Naive thymus-derived CD4-positive, alpha-beta T cell (primary cell): ENCODE measurements at regions of chr10 and their contacts with region 1.

Region 1: DNA sequence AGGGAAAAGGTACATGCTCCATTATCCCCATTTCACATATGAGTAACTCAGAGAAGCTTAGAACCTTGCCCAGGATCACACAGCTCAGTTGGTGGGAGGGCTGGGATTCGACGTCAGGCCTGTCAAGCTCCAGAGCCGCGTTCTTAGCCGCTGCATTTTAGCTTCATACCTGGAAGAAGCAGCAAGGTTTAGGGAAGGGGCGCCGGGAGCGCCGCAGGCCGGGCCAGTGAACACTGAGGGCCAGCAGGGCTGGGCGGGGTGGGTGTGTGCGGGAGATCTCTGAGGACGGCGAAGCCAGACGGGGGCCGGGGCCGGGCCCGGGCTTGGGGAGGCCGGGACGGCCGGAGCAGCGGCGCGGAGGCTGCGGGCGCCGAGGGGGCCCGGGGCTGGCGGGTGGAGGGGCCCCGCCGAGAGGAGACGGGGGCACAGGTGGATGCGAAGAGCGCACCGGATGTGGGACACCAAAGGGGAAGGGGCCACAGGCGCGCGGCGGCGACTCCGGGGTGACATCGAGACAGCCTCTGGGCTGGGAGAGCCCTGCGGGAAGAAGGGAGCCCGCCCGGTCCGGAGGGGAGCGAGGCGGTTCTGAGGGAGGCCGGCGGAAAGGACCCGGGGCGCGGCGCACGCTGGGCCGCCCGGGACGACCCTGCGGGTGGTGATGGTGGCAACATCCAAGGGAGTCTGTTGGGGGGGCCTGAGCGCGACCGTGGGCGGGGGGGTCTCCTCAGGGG is 498 bp downstream of the NDST2 start:
- DNase-seq: peak; percentile 46 to 76 (median 71)
- ATAC-seq: peak; percentile 18
- H3K4me3 ChIP-seq: peak overlapping the region; percentile 69
- H3K4me3 Mint-ChIP-seq: peak overlapping the region; percentile 88 to 97 (median 94)
- H3K27ac ChIP-seq: peak overlapping the region; percentile 97
- H3K27ac Mint-ChIP-seq: peak overlapping the region; percentile 94 to 98 (median 96)
- H3K4me1 ChIP-seq: peaks cover 26 to 31% of the 10 kb centered on the region in 2 donors
- H3K4me1 Mint-ChIP-seq: peaks cover 31 to 54% (median 49%) of the 10 kb centered on the region in 7 donors
- H3K27me3 ChIP-seq: no peaks in the 10 kb centered on the region
- H3K27me3 Mint-ChIP-seq: no peaks in the 10 kb centered on the region

Region 2: DNA sequence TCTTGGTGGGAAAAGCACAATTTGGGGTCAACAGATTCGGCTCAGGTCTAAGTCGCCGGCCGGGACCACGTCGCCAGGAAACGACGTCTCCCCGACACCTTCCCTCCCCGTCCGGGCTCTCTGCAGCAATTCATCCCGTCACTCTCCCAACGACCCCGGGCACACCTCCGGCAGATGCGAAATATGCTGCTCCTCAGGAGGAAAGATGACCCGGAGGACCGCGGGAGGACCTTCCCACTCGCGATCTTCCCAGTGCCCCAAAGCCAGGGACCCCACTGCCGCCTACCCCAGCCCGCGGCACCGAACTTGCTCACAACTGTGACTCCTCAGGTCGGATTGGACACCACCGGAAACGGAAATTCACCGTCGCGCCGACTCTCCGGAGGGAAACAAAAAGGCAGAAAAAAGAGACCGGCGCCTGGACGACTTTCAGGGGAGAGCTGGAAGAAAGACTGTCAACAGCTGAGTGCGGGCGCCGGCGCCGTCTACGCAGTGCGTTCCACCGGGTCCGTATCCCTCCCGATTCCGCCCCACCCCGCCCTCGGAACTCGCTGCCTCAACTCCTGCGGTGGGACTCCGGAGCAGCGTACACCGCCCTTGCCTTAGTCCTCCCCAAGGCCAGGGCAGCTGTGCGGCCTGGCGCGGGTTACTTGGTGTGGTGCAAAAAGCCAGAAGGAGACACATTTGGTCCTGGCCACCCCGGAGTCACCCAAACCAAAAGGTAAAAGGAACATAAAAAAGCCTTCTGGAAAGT is 80.6 kb before region 1 on chr10:
- CTCF ChIA-PET with region 1: no interaction called
- POLR2A ChIA-PET with region 1: no interaction called
- intact Hi-C with region 1: loop called in 1 of 2 experiments (anchors 1 kb)
- DNase-seq: peak; percentile 86 to 94 (median 89)
- ATAC-seq: peak; percentile 94
- H3K4me3 ChIP-seq: peak overlapping the region; percentile 99
- H3K4me3 Mint-ChIP-seq: peak overlapping the region; percentile 95 to 100 (median 98)
- H3K27ac ChIP-seq: peak overlapping the region; percentile 82
- H3K27ac Mint-ChIP-seq: peak overlapping the region; percentile 91 to 98 (median 96)
- H3K4me1 ChIP-seq: peaks cover 5 to 10% of the 10 kb centered on the region in 2 donors
- H3K4me1 Mint-ChIP-seq: peaks cover 0 to 32% (median 21%) of the 10 kb centered on the region in 7 donors
- H3K27me3 ChIP-seq: no peaks in the 10 kb centered on the region
- H3K27me3 Mint-ChIP-seq: no peaks in the 10 kb centered on the region

Region 3: DNA sequence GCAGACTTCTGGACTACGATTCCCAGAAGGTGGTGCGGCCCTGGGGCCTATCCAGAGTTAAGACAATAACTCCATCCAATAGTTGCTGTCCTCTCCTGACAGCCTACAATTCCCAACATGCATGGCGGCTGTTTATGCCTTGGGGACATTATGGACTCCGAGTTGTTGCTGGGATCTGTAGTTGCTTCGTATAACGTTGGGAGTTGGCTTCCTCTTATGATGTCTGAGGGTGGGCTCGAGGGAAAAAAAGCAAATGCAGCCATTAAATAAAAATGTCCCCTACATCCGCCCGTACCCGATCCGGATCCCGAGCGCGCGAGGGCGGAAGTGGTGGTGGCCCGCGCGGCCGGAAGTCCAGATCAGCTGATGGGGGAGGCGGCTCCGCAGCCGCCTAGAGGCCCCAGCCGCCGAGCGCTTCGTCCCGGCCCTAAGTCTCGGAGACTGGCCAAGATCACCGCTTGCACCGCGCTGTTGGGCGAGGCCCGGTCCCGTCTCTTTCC is 25.6 kb before region 1 on chr10 and contains the start of gene ZSWIM8:
- CTCF ChIA-PET with region 1: no interaction called
- POLR2A ChIA-PET with region 1: interaction called, 150 read pairs
- intact Hi-C with region 1: loop called (anchors 1 kb)
- DNase-seq: peak; percentile 70 to 93 (median 86)
- ATAC-seq: peak; percentile 91
- H3K4me3 ChIP-seq: peak within 1 kb of the TSS; percentile 91
- H3K4me3 Mint-ChIP-seq: peak within 1 kb of the TSS; percentile 97 to 100 (median 98)
- H3K27ac ChIP-seq: peak within 1 kb of the TSS; percentile 83
- H3K27ac Mint-ChIP-seq: peak within 1 kb of the TSS; percentile 95 to 99 (median 98)
- H3K4me1 ChIP-seq: peaks cover 36 to 43% of the 10 kb centered on the region in 2 donors
- H3K4me1 Mint-ChIP-seq: peaks cover 27 to 66% (median 53%) of the 10 kb centered on the region in 7 donors
- H3K27me3 ChIP-seq: no peaks in the 10 kb centered on the region
- H3K27me3 Mint-ChIP-seq: no peaks in the 10 kb centered on the region
- total RNA-seq, gene ZSWIM8: 70.9 to 102 (median 83.2) TPM

Region 4: GRCh38 chr10:73791871-73792400 is 19.0 kb before region 1 on chr10:
- CTCF ChIA-PET with region 1: no interaction called
- POLR2A ChIA-PET with region 1: interaction called, 150 read pairs
- intact Hi-C with region 1: no loop called
- DNase-seq: no peak
- ATAC-seq: no peak
- H3K4me3 ChIP-seq: no peak overlapping the region
- H3K4me3 Mint-ChIP-seq: no peak overlapping the region
- H3K27ac ChIP-seq: no peak overlapping the region
- H3K27ac Mint-ChIP-seq: no peak overlapping the region
- H3K4me1 ChIP-seq: peaks cover 4 to 9% of the 10 kb centered on the region in 2 donors
- H3K4me1 Mint-ChIP-seq: peaks cover 5 to 15% (median 10%) of the 10 kb centered on the region in 7 donors
- H3K27me3 ChIP-seq: no peaks in the 10 kb centered on the region
- H3K27me3 Mint-ChIP-seq: no peaks in the 10 kb centered on the region

Region 5: DNA sequence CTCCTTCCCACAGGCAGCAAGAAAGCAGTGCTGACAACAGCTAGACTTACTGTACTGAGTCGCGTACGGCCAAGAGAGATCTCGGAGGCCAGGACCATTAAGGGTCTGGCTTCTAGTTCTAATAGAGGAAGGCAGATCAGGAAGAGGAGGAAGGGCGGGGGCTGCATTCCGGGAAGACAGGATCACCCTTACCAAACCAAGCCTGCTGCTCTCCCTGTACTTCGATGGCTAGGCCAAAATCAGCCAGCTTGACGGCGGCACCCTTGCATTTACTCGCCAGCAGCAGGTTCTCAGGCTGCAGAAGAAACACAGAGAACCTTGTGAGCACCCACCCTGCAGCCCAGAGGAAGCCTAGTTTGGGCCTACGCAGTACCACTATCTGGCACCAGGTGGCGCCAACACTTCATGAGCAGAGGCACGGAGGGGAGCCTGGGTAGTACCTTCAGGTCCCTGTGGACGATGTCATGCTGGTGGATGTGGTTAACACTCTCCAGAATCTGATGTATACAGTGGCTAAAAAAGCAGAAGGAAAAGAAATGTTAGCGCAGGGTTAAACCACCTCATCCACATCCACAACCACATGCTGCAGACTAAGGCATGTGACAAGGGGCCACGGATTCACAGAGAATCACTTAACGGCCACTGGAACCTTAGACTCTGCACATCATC is 38.1 kb after region 1 on chr10:
- CTCF ChIA-PET with region 1: interaction called, 3 read pairs
- POLR2A ChIA-PET with region 1: interaction called, 5 read pairs
- intact Hi-C with region 1: loop called in 1 of 2 experiments (anchors 1 kb)
- DNase-seq: peak; percentile 82 to 93 (median 88)
- ATAC-seq: peak; percentile 100
- H3K4me3 ChIP-seq: no peak overlapping the region
- H3K4me3 Mint-ChIP-seq: peak overlapping the region in 5 of 10 donors; percentile 1 to 58 (median 37)
- H3K27ac ChIP-seq: peak overlapping the region; percentile 56
- H3K27ac Mint-ChIP-seq: peak overlapping the region; percentile 75 to 97 (median 94)
- H3K4me1 ChIP-seq: peaks cover 6 to 7% of the 10 kb centered on the region in 2 donors
- H3K4me1 Mint-ChIP-seq: peaks cover 11 to 23% (median 16%) of the 10 kb centered on the region in 7 donors
- H3K27me3 ChIP-seq: no peaks in the 10 kb centered on the region
- H3K27me3 Mint-ChIP-seq: no peaks in the 10 kb centered on the region

Region 6: DNA sequence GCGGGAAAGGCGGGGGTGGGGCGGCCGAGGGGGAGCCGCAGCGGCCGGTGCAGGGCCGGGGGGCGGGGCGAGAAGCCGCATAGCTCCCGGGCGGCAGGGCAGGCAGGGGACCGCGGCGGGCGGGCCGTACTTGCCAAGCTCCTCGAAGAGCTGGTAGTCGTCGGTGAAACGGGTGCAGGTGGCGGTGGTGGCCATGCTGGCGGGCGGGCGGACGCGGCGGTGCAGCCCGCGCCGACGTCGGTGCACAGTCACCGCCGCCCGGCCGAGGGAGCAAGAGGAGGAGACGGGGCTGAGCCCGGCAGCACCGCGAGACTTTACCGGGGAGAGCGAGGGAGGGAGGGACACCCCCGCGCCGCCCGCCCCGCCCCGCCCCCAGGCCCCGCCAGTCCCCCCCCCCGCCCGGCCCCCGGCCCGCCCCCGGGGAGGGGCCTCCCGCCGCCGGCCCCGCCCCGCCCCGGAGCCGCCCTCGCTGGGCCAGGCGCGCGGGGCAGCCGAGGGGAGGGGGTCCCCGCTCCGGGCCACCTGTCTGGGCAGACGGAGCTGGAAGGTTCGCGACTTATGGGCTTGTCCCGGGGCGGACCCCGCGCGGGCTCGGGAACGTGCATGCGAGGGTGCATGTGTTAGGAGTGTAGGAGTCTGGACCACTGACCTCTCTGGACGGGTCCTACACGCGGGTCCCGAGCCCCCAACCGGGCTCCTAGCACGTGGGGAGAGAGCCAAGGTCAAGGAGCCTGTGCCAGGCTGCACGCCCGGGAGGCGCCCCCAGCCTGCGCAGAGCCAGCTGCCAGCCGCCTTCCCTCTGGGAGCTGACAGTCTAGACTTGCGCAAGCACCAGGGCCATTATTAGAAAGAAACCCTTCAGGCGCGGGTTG is 63.6 kb after region 1 on chr10 and contains the start of gene CAMK2G:
- CTCF ChIA-PET with region 1: interaction called, 14 read pairs
- POLR2A ChIA-PET with region 1: interaction called, 4 read pairs
- intact Hi-C with region 1: loop called (anchors 1 kb)
- DNase-seq: peak; percentile 68 to 86 (median 83)
- ATAC-seq: peak; percentile 91
- H3K4me3 ChIP-seq: peak within 1 kb of the TSS; percentile 94
- H3K4me3 Mint-ChIP-seq: peak within 1 kb of the TSS; percentile 83 to 96 (median 90)
- H3K27ac ChIP-seq: peak within 1 kb of the TSS; percentile 86
- H3K27ac Mint-ChIP-seq: peak within 1 kb of the TSS; percentile 81 to 97 (median 94)
- H3K4me1 ChIP-seq: peaks cover 30 to 48% of the 10 kb centered on the region in 2 donors
- H3K4me1 Mint-ChIP-seq: peaks cover 41 to 84% (median 74%) of the 10 kb centered on the region in 7 donors
- H3K27me3 ChIP-seq: no peaks in the 10 kb centered on the region
- H3K27me3 Mint-ChIP-seq: peaks cover 0 to 2% (median 0%) of the 10 kb centered on the region in 5 donors
- total RNA-seq, gene CAMK2G: 44.6 to 70.9 (median 61.9) TPM

Region 7: GRCh38 chr10:73997787-73998622 is 187.1 kb after region 1 on chr10 and contains the start of gene VCL:
- CTCF ChIA-PET with region 1: no interaction called
- POLR2A ChIA-PET with region 1: no interaction called
- intact Hi-C with region 1: loop called in 1 of 2 experiments (anchors 1 kb)
- DNase-seq: peak; percentile 90 to 97 (median 95)
- ATAC-seq: peak; percentile 99
- H3K4me3 ChIP-seq: peak within 1 kb of the TSS; percentile 71
- H3K4me3 Mint-ChIP-seq: peak within 1 kb of the TSS; percentile 83 to 100 (median 97)
- H3K27ac ChIP-seq: peak within 1 kb of the TSS; percentile 91
- H3K27ac Mint-ChIP-seq: peak within 1 kb of the TSS; percentile 83 to 99 (median 98)
- H3K4me1 ChIP-seq: peaks cover 19 to 22% of the 10 kb centered on the region in 2 donors
- H3K4me1 Mint-ChIP-seq: peaks cover 43 to 53% (median 48%) of the 10 kb centered on the region in 7 donors
- H3K27me3 ChIP-seq: no peaks in the 10 kb centered on the region
- H3K27me3 Mint-ChIP-seq: no peaks in the 10 kb centered on the region
- total RNA-seq, gene VCL: 9.0 to 67.7 (median 21.6) TPM